ENCODE measurements at regions of chr15 and their contacts with region 1.

Region 1: DNA sequence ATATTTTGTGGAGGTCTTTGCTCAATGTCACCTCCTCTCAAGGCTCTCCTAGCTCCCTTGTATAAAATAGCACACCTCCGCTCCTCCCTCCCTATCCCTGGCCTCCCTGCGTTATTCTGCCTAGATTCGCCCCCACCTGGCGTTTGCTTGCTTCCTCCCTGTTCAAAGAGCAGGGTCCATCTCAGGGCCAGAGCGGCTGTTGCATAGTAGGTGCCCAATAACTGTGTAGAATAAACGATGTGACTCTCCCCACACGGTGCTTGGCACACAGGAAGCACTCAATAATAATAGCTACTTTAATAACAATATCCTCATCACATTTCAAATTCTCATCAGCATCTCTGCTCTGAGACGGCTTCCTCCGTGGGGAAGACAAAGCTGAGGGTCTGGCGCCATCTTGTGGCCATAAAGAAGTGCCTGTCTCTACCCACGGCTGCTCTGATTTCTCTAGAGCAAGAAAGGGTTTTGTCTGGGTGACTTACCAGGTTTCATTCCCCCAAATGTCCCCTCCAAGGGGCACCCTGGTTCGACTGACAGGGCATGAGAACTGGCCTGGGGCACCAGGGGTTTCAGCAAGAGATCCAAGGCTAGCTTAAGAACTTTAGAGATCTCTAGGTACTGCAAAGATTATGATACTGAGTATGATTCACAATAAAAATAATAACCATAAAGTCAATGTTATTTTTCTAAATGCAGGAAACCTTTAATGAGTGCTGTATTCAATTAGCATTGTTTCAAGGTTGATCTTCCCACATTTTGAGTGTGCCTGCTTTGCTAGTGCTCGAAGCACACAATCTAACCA is 16.1 kb downstream of the CD276 start:
- DNase-seq: peak; percentile 63 to 92
- ATAC-seq: peak; percentile 50 to 65 (median 54)
- H3K4me3 ChIP-seq: no peak overlapping the region
- H3K4me3 Mint-ChIP-seq: no peak overlapping the region
- H3K27ac ChIP-seq: no peak overlapping the region
- H3K27ac Mint-ChIP-seq: no peak overlapping the region
- H3K4me1 ChIP-seq: peaks cover 13% of the 10 kb centered on the region
- H3K4me1 Mint-ChIP-seq: peaks cover 11 to 29% of the 10 kb centered on the region in 2 donors
- H3K27me3 ChIP-seq: peaks cover 14% of the 10 kb centered on the region
- H3K27me3 Mint-ChIP-seq: peaks cover 37 to 44% of the 10 kb centered on the region in 2 donors
- CTCF ChIP-seq: peak; percentile 84

Region 2: GRCh38 chr15:73240866-73241499 is 459.3 kb before region 1 on chr15:
- intact Hi-C with region 1: loop called (anchors 1 kb)
- DNase-seq: peak; percentile 57 to 81
- ATAC-seq: peak in 2 of 3 donors; percentile 40 to 66
- H3K4me3 ChIP-seq: no peak overlapping the region
- H3K4me3 Mint-ChIP-seq: no peak overlapping the region
- H3K27ac ChIP-seq: no peak overlapping the region
- H3K27ac Mint-ChIP-seq: no peak overlapping the region
- H3K4me1 ChIP-seq: no peaks in the 10 kb centered on the region
- H3K4me1 Mint-ChIP-seq: no peaks in the 10 kb centered on the region
- H3K27me3 ChIP-seq: no peaks in the 10 kb centered on the region
- H3K27me3 Mint-ChIP-seq: peaks cover 0 to 3% of the 10 kb centered on the region in 2 donors
- CTCF ChIP-seq: peak; percentile 98

Region 3: DNA sequence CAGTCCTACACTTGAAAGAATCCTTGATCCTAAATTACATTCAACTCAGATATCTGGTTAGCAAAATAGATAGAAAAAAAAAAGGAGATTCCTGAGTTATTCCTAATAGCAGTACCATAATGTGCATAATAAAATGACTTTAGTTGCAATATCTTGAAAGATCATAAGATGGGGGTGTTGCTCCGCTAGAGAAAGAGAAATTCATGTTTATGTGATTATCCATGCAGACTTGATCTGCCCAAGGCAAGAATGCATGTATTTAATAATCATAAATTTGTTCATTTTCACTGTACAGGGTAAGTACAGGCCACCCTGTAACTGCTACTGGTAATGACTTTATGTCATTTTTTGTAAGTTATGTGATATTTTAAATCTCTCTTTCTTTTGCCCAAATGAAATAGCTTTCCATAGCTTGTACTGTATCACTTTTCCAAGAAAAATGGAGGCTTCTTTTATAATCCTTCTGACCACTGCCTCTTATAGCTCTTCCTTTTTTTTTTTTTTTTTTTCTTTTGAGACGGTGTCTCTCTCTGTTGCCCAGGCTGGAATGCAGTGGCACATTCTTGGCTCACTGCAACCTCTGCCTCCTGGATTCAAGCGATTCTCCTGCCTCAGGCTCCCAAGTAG is 416.0 kb before region 1 on chr15:
- intact Hi-C with region 1: no loop called
- DNase-seq: peak in 1 of 2 donors; percentile 21
- ATAC-seq: no peak
- H3K4me3 ChIP-seq: no peak overlapping the region
- H3K4me3 Mint-ChIP-seq: no peak overlapping the region
- H3K27ac ChIP-seq: no peak overlapping the region
- H3K27ac Mint-ChIP-seq: no peak overlapping the region
- H3K4me1 ChIP-seq: no peaks in the 10 kb centered on the region
- H3K4me1 Mint-ChIP-seq: no peaks in the 10 kb centered on the region
- H3K27me3 ChIP-seq: no peaks in the 10 kb centered on the region
- H3K27me3 Mint-ChIP-seq: no peaks in the 10 kb centered on the region
- CTCF ChIP-seq: no peak

Region 4: GRCh38 chr15:73560501-73561117 is 139.6 kb before region 1 on chr15:
- intact Hi-C with region 1: loop called (anchors 1 kb)
- DNase-seq: peak in 1 of 2 donors; percentile 67
- ATAC-seq: peak; percentile 55 to 72 (median 69)
- H3K4me3 ChIP-seq: no peak overlapping the region
- H3K4me3 Mint-ChIP-seq: no peak overlapping the region
- H3K27ac ChIP-seq: no peak overlapping the region
- H3K27ac Mint-ChIP-seq: no peak overlapping the region
- H3K4me1 ChIP-seq: no peaks in the 10 kb centered on the region
- H3K4me1 Mint-ChIP-seq: peaks cover 0 to 9% of the 10 kb centered on the region in 2 donors
- H3K27me3 ChIP-seq: no peaks in the 10 kb centered on the region
- H3K27me3 Mint-ChIP-seq: no peaks in the 10 kb centered on the region
- CTCF ChIP-seq: peak; percentile 48

Region 5: DNA sequence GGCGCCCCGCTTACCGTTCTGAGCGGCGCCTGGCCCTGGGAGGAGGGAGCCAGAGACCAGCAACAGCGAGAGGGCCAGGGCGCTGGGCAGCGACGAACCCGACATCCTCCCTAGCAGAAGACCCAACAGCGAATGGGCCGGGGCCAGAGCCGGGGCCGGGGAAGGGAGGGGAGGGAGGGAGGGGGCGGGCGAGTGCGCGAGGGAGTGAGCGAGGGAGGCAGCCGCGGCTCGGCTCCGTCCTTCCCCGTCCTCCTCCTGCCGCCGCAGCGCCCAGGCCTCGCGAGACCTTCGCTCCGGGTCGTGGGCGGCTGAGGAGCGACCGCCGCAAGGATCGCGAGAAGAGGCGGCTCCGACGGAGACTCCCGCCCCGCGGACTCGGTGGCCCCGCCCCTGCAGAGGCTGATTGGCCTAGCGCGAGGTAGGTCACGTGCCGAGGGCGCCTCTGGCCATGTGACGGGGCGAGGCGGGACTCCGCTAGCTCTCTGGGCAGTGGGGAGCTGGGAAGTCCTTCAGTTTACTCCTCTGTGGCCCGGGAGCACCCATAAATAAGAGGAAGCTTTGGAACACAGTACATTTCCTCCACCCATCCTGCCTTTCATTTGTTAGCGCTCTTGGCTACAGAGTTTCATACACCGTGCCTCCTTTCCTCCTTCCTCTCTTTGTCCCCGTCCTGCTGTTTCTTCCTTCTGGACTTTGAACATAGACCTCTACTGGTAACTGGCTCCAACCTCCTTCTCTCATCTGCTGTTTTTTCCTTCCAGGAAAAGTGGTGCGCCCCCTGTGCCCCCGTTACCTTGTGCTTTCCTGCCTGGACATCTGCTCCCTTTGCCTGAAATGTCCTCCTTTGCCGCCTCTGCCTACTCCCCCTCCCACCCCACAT is 66.9 kb before region 1 on chr15 and contains the start of gene NPTN:
- intact Hi-C with region 1: loop called (anchors 1 kb)
- DNase-seq: peak; percentile 98
- ATAC-seq: peak; percentile 92 to 97 (median 92)
- H3K4me3 ChIP-seq: peak within 1 kb of the TSS; percentile 87
- H3K4me3 Mint-ChIP-seq: peak within 1 kb of the TSS; percentile 93
- H3K27ac ChIP-seq: peak within 1 kb of the TSS; percentile 73
- H3K27ac Mint-ChIP-seq: peak within 1 kb of the TSS; percentile 75 to 92
- H3K4me1 ChIP-seq: peaks cover 18% of the 10 kb centered on the region
- H3K4me1 Mint-ChIP-seq: peaks cover 45 to 60% of the 10 kb centered on the region in 2 donors
- H3K27me3 ChIP-seq: no peaks in the 10 kb centered on the region
- H3K27me3 Mint-ChIP-seq: peaks cover 14 to 19% of the 10 kb centered on the region in 2 donors
- CTCF ChIP-seq: no peak
- total RNA-seq, gene NPTN: 37.9 to 46.9 (median 46.4) TPM

Region 6: GRCh38 chr15:73677146-73677607 is 23.1 kb before region 1 on chr15:
- intact Hi-C with region 1: loop called (anchors 1 kb)
- DNase-seq: peak; percentile 33 to 78
- ATAC-seq: peak; percentile 30 to 67 (median 65)
- H3K4me3 ChIP-seq: no peak overlapping the region
- H3K4me3 Mint-ChIP-seq: no peak overlapping the region
- H3K27ac ChIP-seq: no peak overlapping the region
- H3K27ac Mint-ChIP-seq: no peak overlapping the region
- H3K4me1 ChIP-seq: no peaks in the 10 kb centered on the region
- H3K4me1 Mint-ChIP-seq: no peaks in the 10 kb centered on the region
- H3K27me3 ChIP-seq: no peaks in the 10 kb centered on the region
- H3K27me3 Mint-ChIP-seq: peaks cover 13 to 20% of the 10 kb centered on the region in 2 donors
- CTCF ChIP-seq: peak; percentile 75

Region 7: DNA sequence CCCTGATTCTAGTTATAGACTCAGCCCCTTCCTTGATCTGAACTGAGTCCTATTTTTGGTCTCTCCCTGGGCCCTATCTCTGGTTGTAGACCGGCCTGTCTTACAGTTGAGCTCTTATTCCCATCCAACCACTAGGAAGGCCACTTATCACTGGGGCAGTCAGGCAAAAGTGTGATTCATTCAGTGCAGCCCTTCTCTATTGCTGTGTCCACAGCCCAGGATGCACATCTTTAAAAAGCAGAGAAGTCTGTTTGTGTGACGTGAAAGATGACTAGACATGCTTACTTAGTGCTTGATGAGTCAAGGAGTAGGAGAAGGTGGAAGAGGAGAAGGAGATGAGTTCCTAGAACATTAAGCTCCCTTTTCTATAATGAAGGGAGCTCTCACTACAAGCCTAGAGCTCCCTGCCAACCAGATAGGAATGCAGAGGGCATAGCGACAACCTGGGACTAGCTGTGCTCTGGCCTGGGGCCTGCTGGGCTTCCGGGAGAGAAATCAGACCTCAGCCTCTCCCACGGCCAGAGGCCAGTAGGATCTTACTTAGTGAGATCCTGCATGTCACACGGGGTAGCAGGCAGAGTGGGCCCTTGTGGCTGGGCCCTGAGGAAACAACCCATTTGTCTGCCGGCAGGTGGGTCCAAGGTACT is 27.2 kb after region 1 on chr15:
- intact Hi-C with region 1: no loop called
- DNase-seq: no peak
- ATAC-seq: no peak
- H3K4me3 ChIP-seq: no peak overlapping the region
- H3K4me3 Mint-ChIP-seq: no peak overlapping the region
- H3K27ac ChIP-seq: no peak overlapping the region
- H3K27ac Mint-ChIP-seq: no peak overlapping the region
- H3K4me1 ChIP-seq: no peaks in the 10 kb centered on the region
- H3K4me1 Mint-ChIP-seq: no peaks in the 10 kb centered on the region
- H3K27me3 ChIP-seq: no peaks in the 10 kb centered on the region
- H3K27me3 Mint-ChIP-seq: peaks cover 8 to 9% of the 10 kb centered on the region in 2 donors
- CTCF ChIP-seq: no peak

Region 8: GRCh38 chr15:73982222-73982962 is 282.1 kb after region 1 on chr15:
- intact Hi-C with region 1: no loop called
- DNase-seq: peak in 1 of 2 donors; percentile 47
- ATAC-seq: peak in 1 of 3 donors; percentile 45
- H3K4me3 ChIP-seq: no peak overlapping the region
- H3K4me3 Mint-ChIP-seq: no peak overlapping the region
- H3K27ac ChIP-seq: no peak overlapping the region
- H3K27ac Mint-ChIP-seq: peak overlapping the region in 1 of 2 donors; percentile 45
- H3K4me1 ChIP-seq: peaks cover 28% of the 10 kb centered on the region
- H3K4me1 Mint-ChIP-seq: peaks cover 0 to 13% of the 10 kb centered on the region in 2 donors
- H3K27me3 ChIP-seq: no peaks in the 10 kb centered on the region
- H3K27me3 Mint-ChIP-seq: peaks cover 7 to 11% of the 10 kb centered on the region in 2 donors
- CTCF ChIP-seq: no peak